Testis (tissue), 5 donors: ENCODE measurements at regions of chr5 and their contacts with region 1.

Region 1: GRCh38 chr5:143824851-143825720 is 13.1 kb downstream of the HMHB1 start:
- DNase-seq: peak; percentile 93
- H3K4me3 ChIP-seq: no peak overlapping the region
- H3K27ac ChIP-seq: no peak overlapping the region
- H3K4me1 ChIP-seq: no peaks in the 10 kb centered on the region
- H3K27me3 ChIP-seq: no peaks in the 10 kb centered on the region
- CTCF ChIP-seq: peak; percentile 86 to 97 (median 87)
- POLR2A ChIP-seq: no peak

Region 2: DNA sequence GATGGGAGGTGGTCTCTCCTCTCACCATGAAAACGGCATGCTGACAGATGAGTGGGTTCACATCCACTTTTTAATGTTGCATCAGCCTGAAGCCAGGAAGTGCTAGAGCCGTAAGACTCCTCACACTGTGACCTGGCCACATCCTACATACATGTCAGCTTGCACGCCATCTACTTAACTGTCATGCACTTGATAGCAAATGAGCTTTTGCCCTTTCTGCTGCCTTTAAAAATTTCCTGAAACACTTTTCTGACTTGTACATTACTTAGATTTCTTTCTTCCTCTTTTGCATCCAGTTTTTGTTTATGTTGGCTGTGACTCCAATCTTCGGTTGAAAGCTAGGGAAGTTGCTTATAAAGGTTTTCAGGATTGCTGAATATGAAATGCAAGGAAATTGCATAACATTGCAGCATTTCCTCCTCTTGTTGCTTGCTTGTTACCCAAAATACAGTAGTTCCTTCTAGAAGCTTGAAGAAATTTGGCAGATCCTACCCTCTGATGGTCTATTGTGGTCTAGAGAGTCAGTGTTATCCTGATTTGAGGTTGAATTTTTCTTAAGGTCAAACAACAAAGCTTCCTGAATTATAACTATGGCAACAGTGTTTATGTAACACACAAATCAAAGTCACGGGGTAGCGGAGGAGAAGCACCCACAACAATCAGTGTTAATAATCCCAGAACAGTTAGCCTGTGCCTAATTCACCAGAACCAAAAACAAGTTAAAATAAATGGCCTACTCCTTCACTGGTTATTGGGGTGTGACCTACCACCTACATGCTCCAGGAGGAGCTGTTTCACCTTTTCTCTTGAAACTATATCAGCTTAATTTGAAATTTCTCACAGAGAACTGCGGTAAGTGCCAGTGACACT is 822.4 kb before region 1 on chr5:
- intact Hi-C with region 1: loop called (anchors 10 kb)
- DNase-seq: no peak
- H3K4me3 ChIP-seq: no peak overlapping the region
- H3K27ac ChIP-seq: peak overlapping the region in 1 of 2 donors; percentile 2
- H3K4me1 ChIP-seq: peaks cover 16% of the 10 kb centered on the region
- H3K27me3 ChIP-seq: no peaks in the 10 kb centered on the region
- CTCF ChIP-seq: peak; percentile 22 to 40 (median 35)
- POLR2A ChIP-seq: no peak

Region 3: DNA sequence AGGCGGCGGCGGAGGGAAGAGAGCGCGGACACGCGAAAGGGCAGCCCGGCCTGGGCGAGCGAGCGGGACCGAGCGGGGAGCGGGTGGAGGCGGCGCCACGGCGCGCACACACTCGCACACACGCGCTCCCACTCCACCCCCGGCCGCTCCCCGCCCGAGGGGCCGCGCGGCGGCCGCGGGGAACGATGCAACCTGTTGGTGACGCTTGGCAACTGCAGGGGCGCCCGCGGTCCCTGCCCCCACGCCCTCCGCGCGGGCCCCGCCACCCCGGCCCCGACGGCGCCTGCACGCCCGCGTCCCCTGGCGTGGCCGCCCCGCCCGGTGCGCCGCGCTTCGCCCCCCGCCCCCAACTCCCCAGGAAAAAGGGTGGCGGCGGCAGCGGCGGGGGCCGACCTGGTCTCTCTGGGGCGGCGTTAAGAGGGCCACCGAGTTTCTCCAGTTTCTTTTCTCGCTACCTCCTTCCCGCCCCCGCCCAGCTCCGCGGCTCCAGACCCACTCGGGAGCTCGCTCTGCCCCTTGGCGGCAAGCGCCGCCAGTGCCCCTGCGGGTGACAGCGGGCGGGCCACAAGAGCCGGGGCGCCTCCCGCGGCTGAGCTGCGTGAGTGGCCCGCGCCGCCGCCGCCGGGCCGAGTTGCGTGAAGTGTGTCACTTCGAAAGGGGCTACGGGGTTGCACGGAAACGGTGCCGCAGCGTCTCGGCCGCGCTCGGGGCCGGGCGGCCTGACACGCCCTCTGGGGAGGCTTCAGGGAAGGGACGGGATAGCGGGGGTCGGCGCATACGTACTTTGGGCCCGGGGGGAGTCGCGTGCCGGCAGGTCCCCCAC is 421.3 kb before region 1 on chr5 and contains the start of gene NR3C1:
- intact Hi-C with region 1: loop called (anchors 10 kb)
- DNase-seq: peak; percentile 86
- H3K4me3 ChIP-seq: peak within 1 kb of the TSS; percentile 87 to 91
- H3K27ac ChIP-seq: peak within 1 kb of the TSS; percentile 97 to 98
- H3K4me1 ChIP-seq: peaks cover 22% of the 10 kb centered on the region
- H3K27me3 ChIP-seq: no peaks in the 10 kb centered on the region
- CTCF ChIP-seq: peak; percentile 41 to 63 (median 43)
- POLR2A ChIP-seq: no peak
- total RNA-seq, gene NR3C1: 34.3 to 37.7 TPM

Region 4: DNA sequence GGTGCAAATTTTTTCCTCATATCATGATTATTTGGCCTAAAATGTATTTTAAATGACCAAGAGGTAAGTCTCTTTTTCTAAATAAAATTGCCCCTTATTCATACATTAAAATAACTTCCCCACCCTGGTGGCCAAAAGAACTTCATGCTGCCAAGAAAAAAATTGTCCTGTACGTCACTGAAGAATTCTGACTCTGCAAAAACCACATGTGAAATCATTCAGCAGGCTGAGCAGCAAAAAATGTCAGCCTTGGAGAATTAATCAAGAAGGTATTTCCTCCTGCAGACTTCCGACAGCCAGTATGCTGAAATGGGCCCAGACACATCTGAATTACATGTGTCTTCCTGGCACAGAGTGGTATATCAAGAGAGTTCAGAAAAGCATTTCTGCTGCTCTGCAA is 107.7 kb before region 1 on chr5:
- intact Hi-C with region 1: no loop called
- DNase-seq: no peak
- H3K4me3 ChIP-seq: no peak overlapping the region
- H3K27ac ChIP-seq: no peak overlapping the region
- H3K4me1 ChIP-seq: no peaks in the 10 kb centered on the region
- H3K27me3 ChIP-seq: no peaks in the 10 kb centered on the region
- CTCF ChIP-seq: no peak
- POLR2A ChIP-seq: no peak